ENCODE measurements at regions of chr11 and their contacts with region 1.

Region 1: GRCh38 chr11:57644748-57645688 is 4.7 kb downstream of the YPEL4 start:
- DNase-seq: peak; percentile 80
- ATAC-seq: peak; percentile 79
- H3K4me3 Mint-ChIP-seq: no peak overlapping the region
- H3K27ac Mint-ChIP-seq: no peak overlapping the region
- H3K4me1 Mint-ChIP-seq: peaks cover 39% of the 10 kb centered on the region
- H3K27me3 Mint-ChIP-seq: peaks cover 42% of the 10 kb centered on the region

Region 2: DNA sequence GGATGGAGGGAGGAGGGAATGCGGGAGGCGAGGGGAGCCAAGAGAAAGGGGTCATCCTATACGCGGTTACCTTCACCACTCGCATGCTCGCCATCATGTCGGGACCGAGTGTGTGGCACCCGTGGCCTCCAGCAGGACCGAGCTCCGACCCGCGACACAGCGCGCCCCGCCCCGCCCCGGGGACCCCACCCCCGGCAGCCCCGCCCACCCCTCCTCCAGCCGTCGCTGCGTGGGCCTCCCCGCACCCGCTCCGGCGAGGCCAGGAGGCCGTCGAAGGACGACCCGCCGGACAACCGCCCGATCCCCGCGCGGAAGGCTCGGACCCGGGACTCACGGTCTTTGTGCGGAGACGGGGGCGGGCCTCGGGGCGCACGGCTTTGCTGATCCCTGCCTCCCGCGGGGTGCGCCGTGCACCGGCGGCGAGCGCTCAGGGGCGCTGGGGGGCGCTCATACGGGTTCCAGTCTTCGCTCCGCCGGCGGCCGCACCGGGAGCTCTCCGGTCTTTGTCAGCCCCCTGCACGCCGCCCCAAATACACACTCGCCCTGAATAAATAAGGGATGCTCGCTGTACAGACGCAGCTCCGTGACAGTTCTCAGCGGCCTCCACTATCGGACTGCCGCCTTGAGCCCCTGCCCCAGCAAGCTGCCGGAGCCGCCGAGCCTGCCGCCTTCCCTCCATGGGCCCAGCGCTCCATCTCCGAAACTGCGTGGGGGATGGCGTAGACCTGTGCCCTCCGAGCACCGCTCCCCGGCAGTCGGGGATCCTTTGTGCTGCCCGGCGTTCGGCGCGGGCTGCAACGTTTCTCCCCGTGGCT is 77.3 kb before region 1 on chr11 and contains the start of gene UBE2L6:
- POLR2A ChIA-PET with region 1: interaction called, 29 read pairs
- DNase-seq: peak; percentile 94
- ATAC-seq: peak; percentile 80
- H3K4me3 Mint-ChIP-seq: peak within 1 kb of the TSS; percentile 97
- H3K27ac Mint-ChIP-seq: peak within 1 kb of the TSS; percentile 97
- H3K4me1 Mint-ChIP-seq: peaks cover 39% of the 10 kb centered on the region
- H3K27me3 Mint-ChIP-seq: no peaks in the 10 kb centered on the region
- total RNA-seq, gene UBE2L6: 220 to 221 TPM

Region 3: GRCh38 chr11:57605028-57605420 is 40.0 kb before region 1 on chr11:
- POLR2A ChIA-PET with region 1: no interaction called
- DNase-seq: no peak
- ATAC-seq: no peak
- H3K4me3 Mint-ChIP-seq: no peak overlapping the region
- H3K27ac Mint-ChIP-seq: no peak overlapping the region
- H3K4me1 Mint-ChIP-seq: no peaks in the 10 kb centered on the region
- H3K27me3 Mint-ChIP-seq: peaks cover 26% of the 10 kb centered on the region

Measured in activated naive CD8-positive, alpha-beta T cell treated with anti-CD3 and anti-CD28 coated beads, Interleukin-2, amount 10 ng/mL, durations not matched to agents 7 days and 5 days (primary cell).